Sigmoid colon (tissue), 7 donors: ENCODE measurements at regions of chr12 and their contacts with region 1.

Region 1: GRCh38 chr12:92928962-92929915 is at the start of gene EEA1:
- DNase-seq: peak; percentile 98
- H3K4me3 ChIP-seq: peak within 1 kb of the TSS; percentile 70 to 99 (median 83)
- H3K27ac ChIP-seq: peak within 1 kb of the TSS; percentile 98 to 100 (median 99)
- H3K4me1 ChIP-seq: peaks cover 0 to 35% (median 23%) of the 10 kb centered on the region in 4 donors
- H3K27me3 ChIP-seq: no peaks in the 10 kb centered on the region
- CTCF ChIP-seq: no peak
- EP300 ChIP-seq: peak in 1 of 4 donors; percentile 3
- POLR2A ChIP-seq: peak; percentile 43 to 89
- total RNA-seq, gene EEA1: 17.9 to 40.2 (median 23.3) TPM

Region 2: DNA sequence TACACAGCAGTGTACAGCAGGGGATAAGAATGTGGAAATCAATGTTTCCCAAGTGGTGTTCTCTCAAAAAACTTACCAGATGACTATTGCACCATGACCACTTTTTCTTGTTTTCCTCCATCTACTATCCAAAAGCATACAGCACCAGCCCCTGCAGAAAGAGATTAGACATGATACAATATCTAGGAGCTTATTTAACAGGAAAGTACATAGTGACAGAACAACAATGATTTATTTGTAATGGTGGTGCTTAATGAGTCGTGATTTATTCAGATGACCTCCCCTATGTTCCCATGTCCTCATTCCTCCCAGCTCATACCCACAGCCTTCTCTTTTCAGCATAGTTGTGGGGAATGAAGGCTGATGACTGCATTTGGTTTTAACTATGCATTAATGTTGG is 1197.2 kb before region 1 on chr12:
- intact Hi-C with region 1: no loop called
- DNase-seq: no peak
- H3K4me3 ChIP-seq: no peak overlapping the region
- H3K27ac ChIP-seq: no peak overlapping the region
- H3K4me1 ChIP-seq: no peaks in the 10 kb centered on the region
- H3K27me3 ChIP-seq: no peaks in the 10 kb centered on the region
- CTCF ChIP-seq: no peak
- EP300 ChIP-seq: no peak
- POLR2A ChIP-seq: no peak

Region 3: GRCh38 chr12:92784795-92785562 is 144.3 kb before region 1 on chr12:
- intact Hi-C with region 1: loop called (anchors 5 kb)
- DNase-seq: no peak
- H3K4me3 ChIP-seq: no peak overlapping the region
- H3K27ac ChIP-seq: no peak overlapping the region
- H3K4me1 ChIP-seq: peaks cover 0 to 8% (median 0%) of the 10 kb centered on the region in 4 donors
- H3K27me3 ChIP-seq: no peaks in the 10 kb centered on the region
- CTCF ChIP-seq: peak in 3 of 4 experiments; percentile 28 to 53 (median 35)
- EP300 ChIP-seq: no peak
- POLR2A ChIP-seq: no peak

Region 4: DNA sequence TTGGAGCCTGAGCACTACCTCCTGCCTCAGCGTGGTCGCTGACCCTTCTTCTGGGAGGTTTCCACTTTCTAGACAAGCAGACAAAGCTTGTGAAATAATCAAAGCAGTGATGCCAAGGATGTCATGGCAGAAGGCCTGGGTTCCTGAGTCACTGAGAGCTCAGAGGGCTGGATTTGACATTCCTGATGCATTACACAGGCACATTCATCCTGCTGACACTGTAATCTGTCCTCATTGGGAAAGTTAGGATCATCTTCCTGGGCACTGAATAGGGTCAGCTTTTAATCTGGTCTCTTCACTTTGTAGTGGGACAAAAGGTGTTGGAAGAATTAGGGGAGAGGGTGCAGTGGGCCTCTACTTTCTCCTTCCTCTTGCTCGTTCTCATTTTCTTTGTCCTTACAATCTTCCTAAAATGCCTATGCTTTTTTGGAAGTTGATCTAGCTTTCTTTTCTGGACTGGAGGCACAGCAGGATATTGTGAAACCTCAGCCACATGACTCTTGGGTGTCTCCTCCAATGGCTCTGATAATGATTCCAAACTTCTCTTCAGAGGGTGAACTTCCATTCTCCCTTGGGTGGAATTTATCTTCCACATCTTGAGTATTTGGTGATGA is 29.7 kb before region 1 on chr12:
- intact Hi-C with region 1: loop called (anchors 2 kb)
- DNase-seq: peak; percentile 94
- H3K4me3 ChIP-seq: no peak overlapping the region
- H3K27ac ChIP-seq: peak overlapping the region; percentile 76 to 89 (median 80)
- H3K4me1 ChIP-seq: peaks cover 0 to 29% (median 17%) of the 10 kb centered on the region in 4 donors
- H3K27me3 ChIP-seq: no peaks in the 10 kb centered on the region
- CTCF ChIP-seq: no peak
- EP300 ChIP-seq: peak in 1 of 4 donors; percentile 40
- POLR2A ChIP-seq: no peak